ENCODE measurements at regions of chr10 and their contacts with region 1.

Region 1: GRCh38 chr10:3867454-3868270 is 82.7 kb upstream of the KLF6 start:
- DNase-seq: no peak
- H3K4me3 Mint-ChIP-seq: no peak overlapping the region
- H3K27ac Mint-ChIP-seq: peak overlapping the region; percentile 77
- H3K4me1 Mint-ChIP-seq: peaks cover 72% of the 10 kb centered on the region
- H3K27me3 Mint-ChIP-seq: no peaks in the 10 kb centered on the region

Region 2: GRCh38 chr10:3805791-3806461 is 61.7 kb before region 1 on chr10:
- intact Hi-C with region 1: loop called (anchors 1 kb)
- DNase-seq: no peak
- H3K4me3 Mint-ChIP-seq: peak overlapping the region; percentile 70
- H3K27ac Mint-ChIP-seq: peak overlapping the region; percentile 99
- H3K4me1 Mint-ChIP-seq: peaks cover 76% of the 10 kb centered on the region
- H3K27me3 Mint-ChIP-seq: no peaks in the 10 kb centered on the region

Region 3: DNA sequence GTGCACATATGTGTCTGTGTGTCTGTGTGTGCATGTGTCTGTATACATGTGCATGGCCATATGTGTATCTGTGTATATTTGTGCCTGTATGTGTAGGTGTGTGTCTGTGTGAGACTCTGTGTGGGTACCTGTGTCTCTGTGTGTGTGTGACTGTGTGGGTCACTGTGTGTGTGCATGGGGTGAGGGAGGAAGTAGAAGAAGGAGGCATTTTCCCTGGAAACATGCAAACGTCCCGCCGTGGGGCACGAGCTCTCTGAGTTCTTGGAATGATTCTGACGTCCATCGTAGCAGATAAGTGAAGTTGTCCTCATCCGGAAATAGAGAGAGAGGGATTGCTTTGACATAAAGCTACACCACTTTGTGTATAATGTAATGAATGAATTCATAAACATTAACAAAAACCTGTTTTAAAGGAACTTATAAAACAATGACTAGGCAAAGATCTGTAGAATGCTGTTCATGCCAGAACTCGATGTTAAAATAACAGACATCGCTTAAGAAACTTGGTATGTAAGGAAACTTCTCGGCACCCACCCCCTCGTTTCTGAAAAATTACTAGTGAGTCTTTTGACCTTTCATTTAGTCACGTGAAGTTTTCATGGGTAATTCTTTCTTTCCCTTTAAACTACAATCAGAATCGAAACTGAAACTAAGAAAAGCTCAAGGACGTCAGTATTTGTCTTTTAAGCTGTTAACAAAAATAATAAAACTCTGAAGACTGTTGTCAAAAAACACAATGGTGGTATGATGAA is 39.1 kb before region 1 on chr10:
- intact Hi-C with region 1: loop called (anchors 2 kb)
- DNase-seq: no peak
- H3K4me3 Mint-ChIP-seq: peak overlapping the region; percentile 58
- H3K27ac Mint-ChIP-seq: peak overlapping the region; percentile 93
- H3K4me1 Mint-ChIP-seq: peaks cover 57% of the 10 kb centered on the region
- H3K27me3 Mint-ChIP-seq: no peaks in the 10 kb centered on the region

Region 4: DNA sequence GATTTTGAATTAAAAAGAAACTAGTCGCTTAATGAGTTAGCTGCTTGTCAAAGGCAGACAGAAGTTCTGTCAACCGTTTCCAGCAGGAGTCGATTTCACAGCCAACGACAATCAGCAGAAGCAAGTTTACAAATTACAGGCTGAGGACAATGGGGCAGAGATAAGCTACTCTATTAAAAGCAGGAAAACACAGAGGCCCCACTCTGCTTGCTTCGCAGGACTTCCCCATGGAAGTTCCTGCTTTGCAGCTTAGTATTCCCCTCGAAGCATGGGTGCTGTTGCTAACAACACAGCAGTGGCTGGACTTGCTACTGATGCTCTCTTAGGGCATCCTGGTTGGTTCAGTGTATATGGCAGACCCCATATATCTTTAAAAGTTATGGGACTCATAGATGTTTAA is 31.9 kb before region 1 on chr10:
- intact Hi-C with region 1: loop called (anchors 1 kb)
- DNase-seq: no peak
- H3K4me3 Mint-ChIP-seq: no peak overlapping the region
- H3K27ac Mint-ChIP-seq: peak overlapping the region; percentile 83
- H3K4me1 Mint-ChIP-seq: peaks cover 36% of the 10 kb centered on the region
- H3K27me3 Mint-ChIP-seq: no peaks in the 10 kb centered on the region

Region 5: DNA sequence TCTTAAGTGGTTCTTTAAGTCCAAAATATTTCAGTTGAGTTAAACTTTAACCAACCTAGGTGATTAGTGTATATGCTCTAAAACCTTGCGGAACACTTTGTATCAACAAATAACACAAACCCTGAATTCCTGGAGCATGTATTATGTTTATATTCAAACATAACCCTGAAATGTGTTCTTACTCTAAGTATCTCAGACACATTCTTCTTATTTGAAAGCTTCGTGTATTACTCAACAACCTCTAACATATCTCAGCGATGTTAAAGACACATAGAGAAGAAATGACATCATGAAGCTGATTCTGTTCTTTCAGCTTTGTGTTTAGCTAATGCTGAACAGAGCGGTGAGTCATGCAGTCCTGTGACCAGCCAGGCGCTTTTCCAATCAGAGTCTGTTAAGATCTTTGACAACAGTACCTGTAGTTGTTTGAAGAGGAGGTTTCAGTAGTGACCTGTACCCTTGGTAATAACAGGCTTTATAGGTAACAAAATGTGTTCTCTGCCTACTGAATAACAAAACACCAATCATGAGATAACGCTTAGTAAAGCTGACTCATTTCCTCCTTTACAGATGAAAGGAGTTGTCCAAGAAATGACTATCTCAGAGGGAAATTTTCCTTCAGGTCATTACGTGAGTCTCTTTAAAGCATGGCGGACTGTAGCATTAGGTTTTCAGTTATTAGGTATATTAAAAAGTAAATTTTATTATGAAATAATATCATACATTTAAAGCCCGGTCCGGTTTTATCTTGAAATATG is 15.3 kb before region 1 on chr10:
- intact Hi-C with region 1: loop called (anchors 1 kb)
- DNase-seq: peak; percentile 58
- H3K4me3 Mint-ChIP-seq: peak overlapping the region; percentile 52
- H3K27ac Mint-ChIP-seq: peak overlapping the region; percentile 92
- H3K4me1 Mint-ChIP-seq: peaks cover 37% of the 10 kb centered on the region
- H3K27me3 Mint-ChIP-seq: no peaks in the 10 kb centered on the region

Region 6: GRCh38 chr10:4344511-4344994 is 476.9 kb after region 1 on chr10:
- intact Hi-C with region 1: loop called (anchors 1 kb)
- DNase-seq: no peak
- H3K4me3 Mint-ChIP-seq: no peak overlapping the region
- H3K27ac Mint-ChIP-seq: peak overlapping the region; percentile 6
- H3K4me1 Mint-ChIP-seq: peaks cover 15% of the 10 kb centered on the region
- H3K27me3 Mint-ChIP-seq: peaks cover 4% of the 10 kb centered on the region

Region 7: DNA sequence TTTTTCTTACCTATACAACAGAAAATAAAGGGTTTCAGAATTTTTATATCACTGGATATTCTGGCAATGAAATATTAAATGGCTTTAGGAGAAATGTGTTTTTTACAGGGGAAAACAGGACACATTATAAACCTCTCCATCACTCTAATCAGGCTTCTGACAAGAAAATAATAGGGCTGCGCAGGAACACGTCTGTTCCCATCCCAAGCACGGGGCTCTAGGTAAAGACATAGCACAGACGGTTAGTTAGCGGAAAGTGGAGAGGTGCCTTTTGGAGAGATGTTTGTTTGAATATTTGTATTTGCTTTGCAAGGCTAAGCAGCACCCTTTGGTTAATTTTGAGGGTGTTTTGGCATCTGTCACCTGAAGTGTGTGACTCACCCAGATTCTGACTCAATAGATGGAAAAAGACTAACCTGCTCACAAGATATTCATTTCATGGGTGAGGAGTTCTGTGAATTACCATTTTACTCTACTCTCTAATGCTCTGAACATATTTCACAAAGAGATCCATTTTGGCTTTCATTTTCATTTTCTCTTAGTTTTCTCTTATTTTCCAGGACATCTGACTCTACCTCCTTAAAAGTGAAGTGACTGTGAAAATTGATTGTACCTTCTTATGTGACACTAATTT is 783.9 kb after region 1 on chr10:
- intact Hi-C with region 1: loop called (anchors 1 kb)
- DNase-seq: no peak
- H3K4me3 Mint-ChIP-seq: peak overlapping the region; percentile 8
- H3K27ac Mint-ChIP-seq: peak overlapping the region; percentile 85
- H3K4me1 Mint-ChIP-seq: peaks cover 32% of the 10 kb centered on the region
- H3K27me3 Mint-ChIP-seq: peaks cover 3% of the 10 kb centered on the region

Measured in activated T-helper 1 cell treated with anti-CD3 and anti-CD28 coated beads, Interleukin-12 subunit alpha, Interleukin-12 subunit beta, Interleukin-2, Interleukin-4 antibody, amounts not matched to agents 30 ng/mL and 10 ng/mL and 1 ng/mL, durations not matched to agents 14 hours and 24 hours and 36 hours (primary cell).